ENCODE measurements at regions of chr3 and their contacts with region 1.

Region 1: DNA sequence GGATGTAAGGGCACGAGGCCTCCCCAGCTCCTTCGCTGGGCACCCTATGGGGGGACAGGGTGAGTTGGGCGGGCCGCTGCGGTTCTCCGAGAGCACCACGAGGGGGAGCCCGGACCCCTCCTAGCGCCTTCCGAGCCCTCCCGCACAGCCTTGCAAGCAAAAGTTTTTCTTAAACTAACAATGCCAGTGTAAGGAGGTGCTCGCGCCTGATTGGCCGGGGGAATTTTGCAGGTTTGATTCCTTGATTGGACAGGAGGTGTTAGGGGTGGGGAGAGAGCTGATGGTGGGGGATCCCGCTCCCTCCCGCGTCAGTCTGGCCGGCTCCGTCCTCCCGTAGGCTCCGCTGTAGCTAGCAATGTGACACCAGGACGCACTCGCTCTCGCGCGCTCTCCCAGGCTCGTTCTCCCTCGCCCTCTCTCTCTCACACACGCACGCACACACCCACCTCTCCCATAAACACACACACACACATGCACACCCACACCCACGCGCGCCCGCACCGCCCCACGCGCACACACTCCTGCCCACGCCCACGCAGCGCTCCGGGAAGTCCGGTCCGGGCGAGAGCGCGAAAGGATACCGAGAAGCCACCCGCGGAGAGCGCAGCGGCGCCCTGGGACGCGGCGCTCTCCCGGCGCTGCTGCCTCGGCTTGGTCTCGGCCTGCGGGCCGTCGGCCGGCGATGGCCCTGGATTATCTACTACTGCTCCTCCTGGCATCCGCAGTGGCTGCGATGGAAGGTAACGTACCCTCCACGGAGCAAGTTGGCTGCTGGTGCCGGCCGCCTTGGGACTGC is at the start of gene EPHB1:
- DNase-seq: peak; percentile 96
- H3K4me3 ChIP-seq: peak within 1 kb of the TSS in 2 of 3 experiments; percentile 47 to 56
- H3K27ac ChIP-seq: no peak within 1 kb of the TSS
- H3K4me1 ChIP-seq: peaks cover 12% of the 10 kb centered on the region
- H3K27me3 ChIP-seq: peaks cover 25 to 35% of the 10 kb centered on the region in 2 experiments
- CTCF ChIP-seq: peak; percentile 88 to 95
- POLR2A ChIP-seq: peak; percentile 18
- total RNA-seq, gene EPHB1: 2.5 and 5.2 TPM in 2 replicates

Region 2: GRCh38 chr3:134406331-134407238 is 388.6 kb before region 1 on chr3:
- CTCF ChIA-PET with region 1: no interaction called
- POLR2A ChIA-PET with region 1: no interaction called
- dilution Hi-C with region 1: no loop called
- intact Hi-C with region 1: no loop called
- DNase-seq: peak; percentile 28
- H3K4me3 ChIP-seq: peak overlapping the region in 2 of 3 experiments; percentile 5 to 29
- H3K27ac ChIP-seq: no peak overlapping the region
- H3K4me1 ChIP-seq: no peaks in the 10 kb centered on the region
- H3K27me3 ChIP-seq: peaks cover 48 to 58% of the 10 kb centered on the region in 2 experiments
- CTCF ChIP-seq: no peak
- POLR2A ChIP-seq: no peak

Region 3: GRCh38 chr3:134600685-134601463 is 194.3 kb before region 1 on chr3:
- CTCF ChIA-PET with region 1: interaction called, 29 read pairs
- POLR2A ChIA-PET with region 1: no interaction called
- dilution Hi-C with region 1: no loop called
- intact Hi-C with region 1: loop called (anchors 1 kb)
- DNase-seq: peak; percentile 56
- H3K4me3 ChIP-seq: no peak overlapping the region
- H3K27ac ChIP-seq: no peak overlapping the region
- H3K4me1 ChIP-seq: no peaks in the 10 kb centered on the region
- H3K27me3 ChIP-seq: peaks cover 2 to 4% of the 10 kb centered on the region in 2 experiments
- CTCF ChIP-seq: peak; percentile 96
- POLR2A ChIP-seq: no peak

Region 4: GRCh38 chr3:134846911-134847317 is 51.8 kb after region 1 on chr3:
- CTCF ChIA-PET with region 1: interaction called, 9 read pairs
- POLR2A ChIA-PET with region 1: no interaction called
- dilution Hi-C with region 1: no loop called
- intact Hi-C with region 1: loop called (anchors 1 kb)
- DNase-seq: peak; percentile 97
- H3K4me3 ChIP-seq: no peak overlapping the region
- H3K27ac ChIP-seq: peak overlapping the region; percentile 56
- H3K4me1 ChIP-seq: peaks cover 18% of the 10 kb centered on the region
- H3K27me3 ChIP-seq: no peaks in the 10 kb centered on the region
- CTCF ChIP-seq: no peak
- POLR2A ChIP-seq: no peak

Region 5: DNA sequence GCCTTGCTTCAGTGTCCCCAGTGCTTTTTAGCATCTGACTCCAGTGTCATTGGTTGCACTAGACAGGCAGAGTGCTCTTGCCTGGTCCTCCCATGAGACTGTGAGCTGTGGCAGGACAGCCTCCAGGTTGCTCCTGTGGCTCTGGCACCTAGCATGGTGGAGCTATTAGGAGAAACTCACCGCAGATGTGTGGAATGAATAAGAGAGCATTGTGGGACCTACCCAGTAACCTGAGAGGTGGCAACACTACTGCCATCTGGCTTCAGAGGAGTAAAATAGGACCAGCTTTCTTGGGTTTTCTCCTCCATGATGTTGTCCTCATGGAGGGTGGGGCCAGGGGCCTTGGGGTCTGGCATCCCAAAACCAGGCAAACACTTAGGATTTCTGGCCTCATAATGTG is 183.5 kb after region 1 on chr3:
- CTCF ChIA-PET with region 1: interaction called, 6 read pairs
- POLR2A ChIA-PET with region 1: no interaction called
- dilution Hi-C with region 1: no loop called
- intact Hi-C with region 1: loop called (anchors 5 kb)
- DNase-seq: no peak
- H3K4me3 ChIP-seq: no peak overlapping the region
- H3K27ac ChIP-seq: no peak overlapping the region
- H3K4me1 ChIP-seq: no peaks in the 10 kb centered on the region
- H3K27me3 ChIP-seq: no peaks in the 10 kb centered on the region
- CTCF ChIP-seq: no peak
- POLR2A ChIP-seq: no peak

Region 6: GRCh38 chr3:135240426-135240825 is 445.3 kb after region 1 on chr3:
- CTCF ChIA-PET with region 1: no interaction called
- POLR2A ChIA-PET with region 1: no interaction called
- dilution Hi-C with region 1: no loop called
- intact Hi-C with region 1: loop called (anchors 10 kb)
- DNase-seq: no peak
- H3K4me3 ChIP-seq: no peak overlapping the region
- H3K27ac ChIP-seq: no peak overlapping the region
- H3K4me1 ChIP-seq: no peaks in the 10 kb centered on the region
- H3K27me3 ChIP-seq: no peaks in the 10 kb centered on the region
- CTCF ChIP-seq: no peak
- POLR2A ChIP-seq: no peak

Region 7: GRCh38 chr3:135885885-135886284 is 1090.7 kb after region 1 on chr3:
- CTCF ChIA-PET with region 1: interaction called, 85 read pairs
- POLR2A ChIA-PET with region 1: no interaction called
- dilution Hi-C with region 1: no loop called
- intact Hi-C with region 1: no loop called
- DNase-seq: no peak
- H3K4me3 ChIP-seq: no peak overlapping the region
- H3K27ac ChIP-seq: no peak overlapping the region
- H3K4me1 ChIP-seq: no peaks in the 10 kb centered on the region
- H3K27me3 ChIP-seq: no peaks in the 10 kb centered on the region
- CTCF ChIP-seq: no peak
- POLR2A ChIP-seq: no peak

Region 8: GRCh38 chr3:136042608-136043221 is 1247.6 kb after region 1 on chr3:
- CTCF ChIA-PET with region 1: interaction called, 106 read pairs
- POLR2A ChIA-PET with region 1: no interaction called
- dilution Hi-C with region 1: no loop called
- intact Hi-C with region 1: loop called (anchors 1 kb)
- DNase-seq: peak; percentile 67
- H3K4me3 ChIP-seq: no peak overlapping the region
- H3K27ac ChIP-seq: no peak overlapping the region
- H3K4me1 ChIP-seq: no peaks in the 10 kb centered on the region
- H3K27me3 ChIP-seq: no peaks in the 10 kb centered on the region
- CTCF ChIP-seq: peak; percentile 23 to 50
- POLR2A ChIP-seq: no peak

Measured in endothelial cell of umbilical vein (primary cell).